ENCODE measurements at regions of chr1 and their contacts with region 1.

Region 1: GRCh38 chr1:24150234-24151174 is 7.6 kb upstream of the IL22RA1 start:
- DNase-seq: peak; percentile 89
- ATAC-seq: peak; percentile 98
- H3K4me3 Mint-ChIP-seq: peak overlapping the region; percentile 74
- H3K27ac Mint-ChIP-seq: peak overlapping the region; percentile 20
- H3K4me1 Mint-ChIP-seq: peaks cover 27% of the 10 kb centered on the region
- H3K27me3 Mint-ChIP-seq: peaks cover 3% of the 10 kb centered on the region
- CTCF ChIP-seq: no peak

Region 2: DNA sequence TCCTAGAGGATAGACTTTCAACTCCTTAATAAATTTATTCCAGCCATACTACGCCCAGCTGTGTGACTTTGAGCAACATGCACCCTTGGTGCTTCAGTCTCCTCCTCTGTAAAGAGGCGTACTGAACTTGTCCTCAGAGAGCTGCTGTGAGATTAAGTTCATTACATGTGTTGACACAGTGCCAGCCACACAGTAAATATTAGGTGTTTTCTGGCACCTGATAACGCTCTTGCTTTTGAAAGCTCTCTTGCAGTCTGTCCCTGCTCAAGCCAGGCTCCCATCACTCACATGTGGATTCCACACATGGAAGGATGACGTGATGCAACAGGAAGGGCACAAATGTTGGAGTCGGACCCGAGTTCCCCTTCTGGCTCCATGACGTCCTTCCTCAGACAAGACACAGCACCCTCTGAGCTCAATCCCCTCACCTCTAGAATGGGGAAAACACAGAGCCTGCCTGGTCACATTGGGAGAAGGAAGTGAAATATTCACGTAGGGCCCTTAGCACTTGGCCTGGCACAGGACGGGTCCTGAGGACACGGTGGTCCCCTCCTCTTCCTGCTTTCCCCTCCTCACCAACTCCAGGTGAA is 28.8 kb after region 1 on chr1:
- CTCF ChIA-PET with region 1: interaction called, 23 read pairs
- POLR2A ChIA-PET with region 1: interaction called, 96 read pairs
- intact Hi-C with region 1: no loop called
- DNase-seq: no peak
- ATAC-seq: no peak
- H3K4me3 Mint-ChIP-seq: no peak overlapping the region
- H3K27ac Mint-ChIP-seq: peak overlapping the region; percentile 4
- H3K4me1 Mint-ChIP-seq: peaks cover 69% of the 10 kb centered on the region
- H3K27me3 Mint-ChIP-seq: no peaks in the 10 kb centered on the region
- CTCF ChIP-seq: no peak

Region 3: DNA sequence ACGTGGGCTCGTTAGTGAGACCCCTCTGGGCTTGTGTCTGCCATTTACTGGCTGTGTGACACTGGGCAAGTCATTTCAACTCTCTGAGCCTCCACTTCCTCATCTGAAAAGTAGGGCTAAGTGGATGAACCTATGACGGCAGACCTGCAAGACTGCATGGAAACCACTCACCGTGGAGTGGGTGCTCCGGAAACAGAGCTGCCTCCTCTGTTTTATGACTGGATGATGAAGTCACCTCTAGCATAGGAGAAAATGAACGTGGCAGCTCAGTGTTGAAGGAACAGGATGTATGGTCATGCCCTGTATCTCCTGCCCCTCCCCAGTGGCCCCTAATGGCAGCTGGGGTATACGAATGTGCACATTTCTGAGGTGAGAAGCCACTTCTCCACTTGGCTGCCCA is 222.5 kb after region 1 on chr1:
- CTCF ChIA-PET with region 1: no interaction called
- POLR2A ChIA-PET with region 1: interaction called, 13 read pairs
- intact Hi-C with region 1: no loop called
- DNase-seq: peak; percentile 25
- ATAC-seq: peak; percentile 92
- H3K4me3 Mint-ChIP-seq: peak overlapping the region; percentile 21
- H3K27ac Mint-ChIP-seq: peak overlapping the region; percentile 87
- H3K4me1 Mint-ChIP-seq: peaks cover 20% of the 10 kb centered on the region
- H3K27me3 Mint-ChIP-seq: no peaks in the 10 kb centered on the region
- CTCF ChIP-seq: no peak

Region 4: GRCh38 chr1:24635195-24635843 is 484.8 kb after region 1 on chr1:
- CTCF ChIA-PET with region 1: interaction called, 5 read pairs
- POLR2A ChIA-PET with region 1: no interaction called
- intact Hi-C with region 1: loop called (anchors 1 kb)
- DNase-seq: no peak
- ATAC-seq: peak; percentile 69
- H3K4me3 Mint-ChIP-seq: no peak overlapping the region
- H3K27ac Mint-ChIP-seq: no peak overlapping the region
- H3K4me1 Mint-ChIP-seq: peaks cover 2% of the 10 kb centered on the region
- H3K27me3 Mint-ChIP-seq: peaks cover 2% of the 10 kb centered on the region
- CTCF ChIP-seq: no peak

Measured in activated B cell treated with CpG ODN at 0.5 μM for 24 hours (primary cell).